ENCODE measurements at regions of chr10 and their contacts with region 1.

Region 1: GRCh38 chr10:69957886-69958555 is 94.6 kb upstream of the MACROH2A2 start:
- DNase-seq: peak; percentile 46
- ATAC-seq: peak; percentile 92
- H3K4me3 ChIP-seq: no peak overlapping the region
- H3K27ac ChIP-seq: no peak overlapping the region
- H3K4me1 ChIP-seq: no peaks in the 10 kb centered on the region
- H3K27me3 ChIP-seq: no peaks in the 10 kb centered on the region
- CTCF ChIP-seq: peak; percentile 64 to 95 (median 86)
- POLR2A ChIP-seq: no peak
- RAD21 ChIP-seq: peak; percentile 73

Region 2: DNA sequence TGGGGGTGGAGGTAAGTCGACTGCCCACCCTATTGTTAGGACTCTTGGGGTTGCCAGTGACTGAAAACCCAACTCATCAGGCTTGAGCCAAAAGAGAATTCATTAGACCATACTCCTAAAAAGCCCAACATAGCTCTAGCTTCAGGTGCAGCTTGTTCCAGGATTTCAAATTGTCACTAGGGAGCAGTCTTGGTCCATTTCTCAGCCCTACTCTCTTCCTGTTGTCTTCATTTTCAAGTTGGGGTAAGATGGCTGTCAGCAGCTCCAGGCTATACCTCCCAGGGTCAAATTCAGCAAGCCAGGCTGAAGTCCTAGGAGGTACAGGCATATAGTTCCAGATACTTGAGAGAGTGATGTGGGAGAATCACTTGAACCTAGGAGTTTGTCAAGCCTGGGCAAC is 171.2 kb before region 1 on chr10:
- CTCF ChIA-PET with region 1: interaction called, 46 read pairs
- POLR2A ChIA-PET with region 1: no interaction called
- RAD21 ChIA-PET with region 1: interaction called, 5 read pairs
- intact Hi-C with region 1: loop called (anchors 5 kb)
- DNase-seq: no peak
- ATAC-seq: peak; percentile 85
- H3K4me3 ChIP-seq: no peak overlapping the region
- H3K27ac ChIP-seq: no peak overlapping the region
- H3K4me1 ChIP-seq: no peaks in the 10 kb centered on the region
- H3K27me3 ChIP-seq: peaks cover 16% of the 10 kb centered on the region
- CTCF ChIP-seq: peak; percentile 42 to 73 (median 49); a peak in 5 of 6 replicates
- POLR2A ChIP-seq: no peak
- RAD21 ChIP-seq: peak; percentile 81

Region 3: DNA sequence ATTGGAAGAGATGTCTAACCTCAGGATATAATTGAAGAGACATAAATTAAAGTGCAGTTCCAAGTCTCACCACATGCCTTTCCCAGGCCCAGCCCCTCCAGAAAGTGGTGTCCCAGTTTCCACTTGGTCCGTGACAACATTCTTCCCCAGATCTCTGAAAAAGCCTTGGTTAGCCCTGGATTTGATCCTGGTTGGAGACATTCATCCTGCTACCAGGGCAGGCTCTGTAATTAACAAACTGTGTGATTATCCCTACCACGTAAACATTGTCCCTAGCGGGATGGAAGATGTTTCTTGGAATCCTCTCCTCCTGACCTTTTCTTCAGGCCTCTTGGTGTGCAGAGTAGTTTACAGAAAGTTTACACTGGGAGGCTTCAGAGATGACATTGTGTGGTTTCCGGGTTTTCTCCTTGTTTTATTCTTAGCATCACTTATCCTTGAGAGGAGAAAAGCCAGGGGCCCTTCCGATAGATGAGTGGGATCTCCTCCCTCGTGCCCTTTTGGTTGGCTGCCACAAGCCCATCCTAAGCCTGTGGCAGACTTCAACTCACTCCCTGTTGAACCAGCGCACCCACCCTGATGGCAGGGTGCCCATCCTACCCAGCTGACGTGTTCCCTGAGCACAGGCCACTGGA is 72.5 kb before region 1 on chr10:
- CTCF ChIA-PET with region 1: interaction called, 16 read pairs
- POLR2A ChIA-PET with region 1: no interaction called
- RAD21 ChIA-PET with region 1: interaction called, 3 to 6 read pairs
- intact Hi-C with region 1: loop called (anchors 10 kb)
- DNase-seq: no peak
- ATAC-seq: peak; percentile 63
- H3K4me3 ChIP-seq: no peak overlapping the region
- H3K27ac ChIP-seq: no peak overlapping the region
- H3K4me1 ChIP-seq: peaks cover 0 to 3% of the 10 kb centered on the region in 2 experiments; a peak in 1 of 4 replicates
- H3K27me3 ChIP-seq: no peaks in the 10 kb centered on the region
- CTCF ChIP-seq: peak in 2 of 3 experiments; percentile 44 to 54; a peak in 4 of 6 replicates
- POLR2A ChIP-seq: no peak
- RAD21 ChIP-seq: no peak

Region 4: GRCh38 chr10:69944761-69945160 is 13.3 kb before region 1 on chr10:
- CTCF ChIA-PET with region 1: interaction called, 18 read pairs
- POLR2A ChIA-PET with region 1: no interaction called
- RAD21 ChIA-PET with region 1: no interaction called
- intact Hi-C with region 1: no loop called
- DNase-seq: no peak
- ATAC-seq: no peak
- H3K4me3 ChIP-seq: no peak overlapping the region
- H3K27ac ChIP-seq: no peak overlapping the region
- H3K4me1 ChIP-seq: no peaks in the 10 kb centered on the region
- H3K27me3 ChIP-seq: no peaks in the 10 kb centered on the region
- CTCF ChIP-seq: no peak
- POLR2A ChIP-seq: no peak
- RAD21 ChIP-seq: no peak

Region 5: DNA sequence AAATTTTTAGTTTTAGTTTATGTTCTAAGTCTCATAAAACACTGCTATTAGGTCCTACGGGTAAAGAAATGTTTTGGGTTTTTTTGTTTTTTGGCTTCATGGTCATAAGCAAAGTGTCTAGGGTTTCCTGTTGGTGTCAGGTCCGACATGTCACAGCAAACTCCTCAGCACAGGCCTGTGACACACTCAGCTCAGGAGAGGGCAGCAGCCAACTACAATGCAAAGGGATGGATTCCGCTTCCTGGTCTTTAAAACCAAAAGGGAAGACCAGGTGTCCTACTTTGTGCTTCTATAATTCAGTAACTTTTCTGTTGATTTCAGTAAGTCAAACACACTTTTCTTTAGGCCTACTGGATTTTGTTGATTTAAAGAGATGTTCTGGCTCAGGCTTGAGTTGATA is 10.8 kb after region 1 on chr10:
- CTCF ChIA-PET with region 1: interaction called, 15 read pairs
- POLR2A ChIA-PET with region 1: no interaction called
- RAD21 ChIA-PET with region 1: no interaction called
- intact Hi-C with region 1: no loop called
- DNase-seq: peak; percentile 13
- ATAC-seq: peak; percentile 78
- H3K4me3 ChIP-seq: no peak overlapping the region
- H3K27ac ChIP-seq: no peak overlapping the region
- H3K4me1 ChIP-seq: no peaks in the 10 kb centered on the region
- H3K27me3 ChIP-seq: no peaks in the 10 kb centered on the region; the same call in 1 of the 2 replicates
- CTCF ChIP-seq: peak; percentile 32 to 56 (median 44); a peak in 4 of 6 replicates
- POLR2A ChIP-seq: no peak
- RAD21 ChIP-seq: peak; percentile 77

Region 6: GRCh38 chr10:69974551-69975155 is 16.6 kb after region 1 on chr10:
- CTCF ChIA-PET with region 1: interaction called, 15 read pairs
- POLR2A ChIA-PET with region 1: no interaction called
- RAD21 ChIA-PET with region 1: no interaction called
- intact Hi-C with region 1: no loop called
- DNase-seq: no peak
- ATAC-seq: no peak
- H3K4me3 ChIP-seq: no peak overlapping the region
- H3K27ac ChIP-seq: no peak overlapping the region
- H3K4me1 ChIP-seq: peaks cover 0 to 4% of the 10 kb centered on the region in 2 experiments; a peak in 1 of 4 replicates
- H3K27me3 ChIP-seq: no peaks in the 10 kb centered on the region
- CTCF ChIP-seq: no peak
- POLR2A ChIP-seq: no peak
- RAD21 ChIP-seq: no peak

Region 7: GRCh38 chr10:70363971-70364771 is 406.1 kb after region 1 on chr10:
- CTCF ChIA-PET with region 1: interaction called, 6 read pairs
- POLR2A ChIA-PET with region 1: no interaction called
- RAD21 ChIA-PET with region 1: no interaction called
- intact Hi-C with region 1: loop called (anchors 10 kb)
- DNase-seq: peak; percentile 67
- ATAC-seq: peak; percentile 99
- H3K4me3 ChIP-seq: no peak overlapping the region
- H3K27ac ChIP-seq: no peak overlapping the region; the same call in 1 of the 2 replicates
- H3K4me1 ChIP-seq: peaks cover 2 to 10% of the 10 kb centered on the region in 2 experiments; a peak in 3 of 4 replicates
- H3K27me3 ChIP-seq: no peaks in the 10 kb centered on the region
- CTCF ChIP-seq: peak; percentile 85 to 94 (median 91)
- POLR2A ChIP-seq: no peak
- RAD21 ChIP-seq: peak; percentile 99

Measured in HCT116 (cell line).